Caco-2 (cell line): ENCODE measurements at regions of chr7 and their contacts with region 1.

Region 1: DNA sequence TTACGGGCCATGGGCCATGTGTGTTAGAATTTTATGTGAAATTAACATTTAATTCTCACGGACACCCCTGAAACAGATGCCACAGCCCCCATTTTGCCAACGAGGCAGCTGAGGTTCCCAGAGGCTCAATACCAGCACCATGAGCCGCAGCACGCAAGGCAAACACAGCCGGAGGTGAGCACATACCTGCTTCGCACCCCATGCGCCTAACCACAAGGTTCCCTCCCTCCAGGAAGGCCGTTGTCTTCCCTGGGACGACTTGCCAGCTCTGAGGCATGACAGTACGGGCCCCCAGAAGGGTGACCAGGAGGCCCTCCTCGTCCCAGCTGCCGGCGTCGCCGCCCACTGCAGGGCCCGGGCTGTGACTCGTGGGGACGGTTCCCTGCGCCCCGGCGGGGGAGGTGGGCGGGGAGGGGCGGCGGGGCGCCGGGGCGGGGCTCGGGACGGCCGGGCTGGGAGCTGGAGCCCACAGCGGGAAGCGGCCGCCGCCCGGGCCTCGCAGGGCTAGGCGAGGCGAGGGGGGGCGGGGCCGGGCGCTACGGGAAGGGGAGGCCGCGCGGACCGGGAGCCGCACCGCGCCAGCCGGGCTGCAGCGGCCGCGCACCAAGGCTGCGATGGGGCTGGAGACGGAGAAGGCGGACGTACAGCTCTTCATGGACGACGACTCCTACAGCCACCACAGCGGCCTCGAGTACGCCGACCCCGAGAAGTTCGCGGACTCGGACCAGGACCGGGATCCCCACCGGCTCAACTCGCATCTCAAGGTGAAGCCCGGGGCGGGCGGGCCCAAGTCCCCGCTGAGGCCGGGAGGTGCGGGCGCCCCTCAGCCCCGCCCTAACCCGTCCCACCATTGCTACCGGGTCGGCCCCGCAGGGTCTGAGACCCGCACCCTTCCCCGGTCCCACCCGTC is at the start of gene CAV2:
- DNase-seq: peak; percentile 79 to 82
- H3K4me3 ChIP-seq: peak within 1 kb of the TSS; percentile 83
- H3K4me3 Mint-ChIP-seq: peak within 1 kb of the TSS; percentile 86
- H3K27ac Mint-ChIP-seq: peak within 1 kb of the TSS; percentile 34
- H3K4me1 ChIP-seq: peaks cover 27% of the 10 kb centered on the region
- H3K4me1 Mint-ChIP-seq: peaks cover 15% of the 10 kb centered on the region
- H3K27me3 ChIP-seq: no peaks in the 10 kb centered on the region
- H3K27me3 Mint-ChIP-seq: no peaks in the 10 kb centered on the region
- CTCF ChIP-seq: no peak
- total RNA-seq, gene CAV2: 17.6 and 18.1 TPM in 2 replicates

Region 2: GRCh38 chr7:115996911-115997615 is 502.4 kb before region 1 on chr7:
- CTCF ChIA-PET with region 1: no interaction called
- POLR2A ChIA-PET with region 1: no interaction called
- intact Hi-C with region 1: no loop called
- DNase-seq: no peak
- H3K4me3 ChIP-seq: no peak overlapping the region
- H3K4me3 Mint-ChIP-seq: no peak overlapping the region
- H3K27ac Mint-ChIP-seq: no peak overlapping the region
- H3K4me1 ChIP-seq: no peaks in the 10 kb centered on the region
- H3K4me1 Mint-ChIP-seq: no peaks in the 10 kb centered on the region
- H3K27me3 ChIP-seq: no peaks in the 10 kb centered on the region
- H3K27me3 Mint-ChIP-seq: no peaks in the 10 kb centered on the region
- CTCF ChIP-seq: no peak

Region 3: GRCh38 chr7:116451958-116452729 is 47.3 kb before region 1 on chr7:
- CTCF ChIA-PET with region 1: no interaction called
- POLR2A ChIA-PET with region 1: no interaction called
- intact Hi-C with region 1: loop called (anchors 5 kb)
- DNase-seq: no peak
- H3K4me3 ChIP-seq: no peak overlapping the region
- H3K4me3 Mint-ChIP-seq: no peak overlapping the region
- H3K27ac Mint-ChIP-seq: no peak overlapping the region
- H3K4me1 ChIP-seq: peaks cover 19% of the 10 kb centered on the region
- H3K4me1 Mint-ChIP-seq: peaks cover 7% of the 10 kb centered on the region
- H3K27me3 ChIP-seq: no peaks in the 10 kb centered on the region
- H3K27me3 Mint-ChIP-seq: no peaks in the 10 kb centered on the region
- CTCF ChIP-seq: peak in 1 of 2 experiments; percentile 21

Region 4: DNA sequence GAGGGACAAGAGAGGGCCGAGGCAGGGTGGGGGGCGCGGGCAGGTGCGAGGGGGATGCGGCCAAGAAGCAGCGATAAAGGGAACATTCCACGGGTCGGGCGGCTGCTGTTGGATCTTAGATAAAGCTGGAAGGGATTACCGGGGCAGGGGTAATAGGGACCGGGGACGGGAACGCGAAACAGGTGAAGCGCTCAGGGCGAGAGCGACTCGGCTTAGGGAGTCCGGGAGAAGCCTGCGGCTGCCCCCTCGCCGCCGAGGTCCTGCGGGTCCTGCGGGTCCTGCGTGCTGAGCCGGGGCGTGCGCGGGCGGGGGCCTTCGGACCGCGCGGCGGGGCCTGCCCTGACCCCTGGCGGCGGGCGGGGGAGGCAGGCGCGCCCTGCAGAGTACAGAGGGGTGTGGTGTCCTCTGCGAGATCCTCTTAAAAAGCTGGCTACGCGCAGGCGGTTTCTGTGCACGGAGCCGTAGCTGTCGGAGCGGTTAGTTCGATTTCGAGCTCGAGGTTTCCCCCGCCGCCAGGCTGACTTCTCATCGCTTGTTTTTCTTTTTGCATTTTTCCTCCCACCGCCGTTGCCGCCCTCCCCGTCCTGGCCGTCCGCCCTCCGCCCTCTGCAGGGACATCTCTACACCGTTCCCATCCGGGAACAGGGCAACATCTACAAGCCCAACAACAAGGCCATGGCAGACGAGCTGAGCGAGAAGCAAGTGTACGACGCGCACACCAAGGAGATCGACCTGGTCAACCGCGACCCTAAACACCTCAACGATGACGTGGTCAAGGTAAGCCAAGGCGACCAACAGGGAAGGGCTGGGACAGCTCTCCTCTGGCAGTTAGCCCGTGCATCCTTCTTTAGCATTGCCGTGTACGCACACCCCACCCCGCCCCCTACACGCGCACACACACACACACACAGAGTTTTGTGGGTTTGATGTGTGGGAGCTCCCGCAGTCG is 26.8 kb after region 1 on chr7:
- CTCF ChIA-PET with region 1: interaction called, 4 read pairs
- POLR2A ChIA-PET with region 1: no interaction called
- intact Hi-C with region 1: loop called (anchors 1 kb)
- DNase-seq: peak; percentile 75 to 88
- H3K4me3 ChIP-seq: peak overlapping the region; percentile 60
- H3K4me3 Mint-ChIP-seq: peak overlapping the region; percentile 94
- H3K27ac Mint-ChIP-seq: peak overlapping the region; percentile 52
- H3K4me1 ChIP-seq: peaks cover 10% of the 10 kb centered on the region; the same call in 1 of the 2 replicates
- H3K4me1 Mint-ChIP-seq: no peaks in the 10 kb centered on the region
- H3K27me3 ChIP-seq: no peaks in the 10 kb centered on the region
- H3K27me3 Mint-ChIP-seq: no peaks in the 10 kb centered on the region
- CTCF ChIP-seq: peak; percentile 66 to 91